HCT116 (cell line): ENCODE measurements at regions of chr4 and their contacts with region 1.

Region 1: GRCh38 chr4:37802068-37802666 is 24.3 kb upstream of the PGM2 start:
- DNase-seq: peak; percentile 86
- ATAC-seq: peak; percentile 98
- H3K4me3 ChIP-seq: peak overlapping the region in 1 of 2 experiments; percentile 35; a peak in 2 of 4 replicates
- H3K27ac ChIP-seq: no peak overlapping the region
- H3K4me1 ChIP-seq: peaks cover 0 to 13% of the 10 kb centered on the region in 2 experiments; a peak in 2 of 4 replicates
- H3K27me3 ChIP-seq: no peaks in the 10 kb centered on the region
- CTCF ChIP-seq: peak; percentile 69 to 98 (median 79)
- POLR2A ChIP-seq: no peak
- RAD21 ChIP-seq: peak; percentile 90

Region 2: GRCh38 chr4:36651253-36651652 is 1150.9 kb before region 1 on chr4:
- CTCF ChIA-PET with region 1: no interaction called
- POLR2A ChIA-PET with region 1: no interaction called
- RAD21 ChIA-PET with region 1: no interaction called
- intact Hi-C with region 1: no loop called
- DNase-seq: peak; percentile 2
- ATAC-seq: no peak
- H3K4me3 ChIP-seq: no peak overlapping the region
- H3K27ac ChIP-seq: no peak overlapping the region
- H3K4me1 ChIP-seq: peaks cover 3 to 9% of the 10 kb centered on the region in 2 experiments; a peak in 2 of 4 replicates
- H3K27me3 ChIP-seq: no peaks in the 10 kb centered on the region
- CTCF ChIP-seq: no peak
- POLR2A ChIP-seq: no peak
- RAD21 ChIP-seq: no peak

Region 3: DNA sequence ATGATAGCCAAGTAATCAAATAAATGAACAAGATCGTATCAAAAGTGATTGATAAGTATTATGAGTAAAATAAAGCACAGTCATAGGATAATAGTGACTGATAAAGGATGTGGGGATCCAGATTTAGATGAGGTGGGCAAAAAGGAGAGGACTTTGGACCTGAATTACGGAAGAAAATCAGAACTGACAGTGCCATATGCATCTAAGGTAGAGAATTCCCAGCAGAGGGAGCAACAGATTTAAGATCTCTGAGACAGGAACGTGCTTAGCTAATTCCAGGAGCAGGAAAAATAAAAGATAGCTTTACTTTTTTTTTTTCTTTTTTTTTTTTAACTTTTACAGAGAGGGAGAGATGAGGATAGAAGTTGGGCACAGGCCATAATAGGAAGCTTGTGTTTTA is 367.7 kb before region 1 on chr4:
- CTCF ChIA-PET with region 1: interaction called, 12 read pairs
- POLR2A ChIA-PET with region 1: no interaction called
- RAD21 ChIA-PET with region 1: no interaction called
- intact Hi-C with region 1: no loop called
- DNase-seq: peak; percentile 16
- ATAC-seq: peak; percentile 55
- H3K4me3 ChIP-seq: no peak overlapping the region
- H3K27ac ChIP-seq: no peak overlapping the region
- H3K4me1 ChIP-seq: no peaks in the 10 kb centered on the region
- H3K27me3 ChIP-seq: no peaks in the 10 kb centered on the region
- CTCF ChIP-seq: peak; percentile 28 to 33 (median 31); a peak in 3 of 6 replicates
- POLR2A ChIP-seq: no peak
- RAD21 ChIP-seq: peak; percentile 49

Region 4: GRCh38 chr4:37452952-37453280 is 349.3 kb before region 1 on chr4:
- CTCF ChIA-PET with region 1: interaction called, 10 read pairs
- POLR2A ChIA-PET with region 1: no interaction called
- RAD21 ChIA-PET with region 1: no interaction called
- intact Hi-C with region 1: loop called (anchors 2 kb)
- DNase-seq: peak; percentile 58
- ATAC-seq: peak; percentile 93
- H3K4me3 ChIP-seq: no peak overlapping the region
- H3K27ac ChIP-seq: no peak overlapping the region
- H3K4me1 ChIP-seq: no peaks in the 10 kb centered on the region
- H3K27me3 ChIP-seq: no peaks in the 10 kb centered on the region
- CTCF ChIP-seq: peak; percentile 57 to 80 (median 73)
- POLR2A ChIP-seq: no peak
- RAD21 ChIP-seq: peak; percentile 82

Region 5: DNA sequence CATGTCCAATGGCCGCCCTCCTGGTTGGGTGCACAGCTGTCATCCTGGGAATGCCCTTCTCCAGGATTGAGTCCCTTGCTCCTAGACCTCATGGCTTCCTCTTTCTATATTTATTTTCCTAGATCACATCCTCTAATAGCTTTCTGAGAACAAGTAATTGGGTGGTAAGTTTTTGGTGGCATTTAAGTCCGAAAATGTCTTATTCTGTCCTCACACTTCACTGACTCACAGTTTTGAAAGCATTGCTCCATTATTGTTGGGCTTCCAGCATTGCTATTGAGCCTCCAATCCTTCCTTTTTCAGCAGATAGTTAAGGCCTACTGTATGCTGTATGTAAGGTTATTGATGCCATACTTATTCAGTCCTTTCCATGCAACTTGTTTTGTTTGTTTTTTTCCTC is 50.2 kb after region 1 on chr4:
- CTCF ChIA-PET with region 1: no interaction called
- POLR2A ChIA-PET with region 1: no interaction called
- RAD21 ChIA-PET with region 1: no interaction called
- intact Hi-C with region 1: no loop called
- DNase-seq: no peak
- ATAC-seq: no peak
- H3K4me3 ChIP-seq: no peak overlapping the region
- H3K27ac ChIP-seq: no peak overlapping the region
- H3K4me1 ChIP-seq: no peaks in the 10 kb centered on the region
- H3K27me3 ChIP-seq: no peaks in the 10 kb centered on the region
- CTCF ChIP-seq: no peak
- POLR2A ChIP-seq: no peak
- RAD21 ChIP-seq: no peak

Region 6: GRCh38 chr4:38034986-38035882 is 233.1 kb after region 1 on chr4:
- CTCF ChIA-PET with region 1: interaction called, 18 read pairs
- POLR2A ChIA-PET with region 1: no interaction called
- RAD21 ChIA-PET with region 1: interaction called, 3 to 5 read pairs
- intact Hi-C with region 1: loop called (anchors 1 kb)
- DNase-seq: peak; percentile 44
- ATAC-seq: peak; percentile 65; the same call in 1 of the 2 replicates
- H3K4me3 ChIP-seq: no peak overlapping the region
- H3K27ac ChIP-seq: no peak overlapping the region
- H3K4me1 ChIP-seq: no peaks in the 10 kb centered on the region
- H3K27me3 ChIP-seq: no peaks in the 10 kb centered on the region
- CTCF ChIP-seq: peak; percentile 56 to 74 (median 69); a peak in 5 of 6 replicates
- POLR2A ChIP-seq: no peak
- RAD21 ChIP-seq: peak; percentile 79

Region 7: DNA sequence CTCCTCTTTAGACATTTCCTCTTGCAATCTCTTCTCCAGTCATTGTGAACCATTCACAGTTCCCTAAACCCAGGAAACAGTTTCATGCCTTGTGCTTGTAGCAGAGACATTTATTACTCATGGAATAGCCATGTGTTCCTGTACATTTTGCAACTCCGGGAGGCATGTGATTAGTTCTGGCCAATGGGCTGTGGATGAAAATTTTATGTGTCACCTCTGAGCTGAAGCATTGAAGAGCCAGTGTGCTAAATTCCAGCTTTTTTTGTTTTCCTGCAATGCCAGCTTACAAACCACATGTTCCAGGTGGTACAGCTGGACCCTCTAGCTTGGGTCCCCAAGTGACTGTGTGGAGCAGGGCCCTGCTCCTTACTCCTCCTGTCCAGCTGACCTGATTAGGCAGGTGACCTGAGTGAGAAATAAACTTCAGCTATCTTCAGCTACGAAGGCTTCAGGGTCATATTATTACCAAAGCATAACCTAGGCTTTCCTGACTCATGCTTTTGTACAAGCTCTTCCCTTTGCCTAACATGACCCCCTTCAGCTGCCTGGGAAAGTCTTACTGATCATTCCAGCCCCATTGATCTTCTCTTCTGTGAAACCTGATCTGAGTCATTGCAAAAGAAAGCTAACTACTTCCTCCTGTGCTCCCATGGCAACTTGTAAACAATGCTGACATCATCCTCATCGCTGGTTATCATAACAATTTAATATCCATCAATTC is 358.5 kb after region 1 on chr4:
- CTCF ChIA-PET with region 1: no interaction called
- POLR2A ChIA-PET with region 1: no interaction called
- RAD21 ChIA-PET with region 1: no interaction called
- intact Hi-C with region 1: loop called (anchors 5 kb)
- DNase-seq: peak; percentile 88
- ATAC-seq: peak; percentile 70
- H3K4me3 ChIP-seq: no peak overlapping the region
- H3K27ac ChIP-seq: peak overlapping the region; percentile 43
- H3K4me1 ChIP-seq: peaks cover 36 to 54% of the 10 kb centered on the region in 2 experiments
- H3K27me3 ChIP-seq: no peaks in the 10 kb centered on the region
- CTCF ChIP-seq: no peak
- POLR2A ChIP-seq: no peak
- RAD21 ChIP-seq: no peak

Region 8: GRCh38 chr4:38396845-38397547 is 594.8 kb after region 1 on chr4:
- CTCF ChIA-PET with region 1: no interaction called
- POLR2A ChIA-PET with region 1: no interaction called
- RAD21 ChIA-PET with region 1: no interaction called
- intact Hi-C with region 1: no loop called
- DNase-seq: no peak
- ATAC-seq: no peak
- H3K4me3 ChIP-seq: no peak overlapping the region
- H3K27ac ChIP-seq: no peak overlapping the region
- H3K4me1 ChIP-seq: no peaks in the 10 kb centered on the region
- H3K27me3 ChIP-seq: no peaks in the 10 kb centered on the region
- CTCF ChIP-seq: no peak
- POLR2A ChIP-seq: no peak
- RAD21 ChIP-seq: no peak

Region 9: DNA sequence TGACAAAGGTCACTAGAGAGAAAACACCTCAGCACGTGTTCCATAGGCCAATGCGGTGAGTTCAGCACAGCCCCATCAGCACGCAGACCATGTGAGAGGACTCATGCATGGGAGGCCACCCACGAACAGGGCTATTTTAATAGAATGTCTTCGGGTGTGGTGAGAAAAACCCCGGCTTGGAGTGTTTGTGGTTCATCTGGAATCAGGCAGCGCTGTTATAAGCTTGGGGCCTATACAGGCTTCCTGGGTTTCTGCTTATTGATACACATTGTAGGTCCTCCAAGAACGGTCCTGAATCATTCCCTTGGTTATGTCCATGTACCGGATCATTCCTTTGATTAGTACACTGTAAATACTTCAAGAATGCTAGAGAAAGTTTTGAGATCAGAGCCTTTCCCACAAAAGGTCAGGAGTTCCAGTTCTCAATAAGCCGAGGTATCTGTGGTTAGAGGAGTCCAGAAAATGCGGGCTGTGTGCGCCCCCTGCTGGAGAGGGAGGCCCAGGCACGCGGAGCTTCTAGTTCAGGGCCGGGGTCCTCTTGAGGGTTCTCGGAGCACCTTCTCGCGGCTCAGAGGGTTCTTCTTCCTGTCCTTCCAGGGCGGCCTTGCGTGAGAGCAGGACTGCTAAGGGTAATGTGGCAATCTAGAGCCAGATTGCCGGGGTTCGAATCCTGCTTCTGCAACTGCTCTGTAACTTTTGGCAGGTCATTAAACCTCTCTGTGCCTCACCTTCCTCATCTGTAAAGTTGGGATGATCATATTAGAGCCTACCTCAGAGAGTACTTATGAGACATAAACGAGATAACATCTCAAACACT is 928.9 kb after region 1 on chr4:
- CTCF ChIA-PET with region 1: no interaction called
- POLR2A ChIA-PET with region 1: no interaction called
- RAD21 ChIA-PET with region 1: no interaction called
- intact Hi-C with region 1: loop called (anchors 1 kb)
- DNase-seq: peak; percentile 50
- ATAC-seq: peak; percentile 64
- H3K4me3 ChIP-seq: 0 out of 4 replicates have a peak overlapping the region, but pooled peaks of 1 of the 2 experiments have one; percentile 5
- H3K27ac ChIP-seq: no peak overlapping the region
- H3K4me1 ChIP-seq: peaks cover 22 to 30% of the 10 kb centered on the region in 2 experiments
- H3K27me3 ChIP-seq: no peaks in the 10 kb centered on the region
- CTCF ChIP-seq: peak; percentile 82 to 99 (median 96)
- POLR2A ChIP-seq: no peak
- RAD21 ChIP-seq: peak; percentile 96